Panc1 (cell line): ENCODE measurements at regions of chr1 and their contacts with region 1.

Region 1: DNA sequence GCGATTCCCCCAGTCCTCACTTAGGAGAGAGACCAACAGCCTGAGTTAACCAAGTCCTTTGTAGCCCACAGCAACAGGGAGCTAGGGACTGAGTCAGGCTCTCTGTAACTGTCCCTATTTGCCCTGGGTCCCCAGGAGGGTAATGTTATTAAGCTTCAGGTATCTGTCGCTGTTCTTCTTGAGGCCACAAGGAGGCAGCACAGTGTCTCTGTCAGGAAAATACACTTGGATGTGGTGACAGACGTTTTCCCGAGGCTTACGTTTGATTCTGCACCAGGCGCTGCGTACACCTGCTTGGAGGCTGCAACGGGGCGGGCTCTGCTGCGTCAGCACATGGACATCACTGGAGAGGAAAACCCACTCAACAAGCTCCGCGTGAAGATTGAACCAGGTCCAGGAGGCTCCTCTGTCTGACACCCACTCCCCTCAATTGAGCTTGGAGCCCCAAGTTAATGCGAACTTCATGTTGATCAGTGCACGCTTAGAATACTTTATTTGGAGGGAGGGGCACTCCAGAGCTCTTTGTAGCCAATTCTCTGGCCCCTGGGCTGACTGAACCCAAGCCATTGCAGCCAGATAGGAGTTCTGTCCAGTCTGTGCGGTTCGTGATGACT is 10.7 kb upstream of the ELF3 start:
- DNase-seq: no peak
- ATAC-seq: peak; percentile 85
- H3K4me3 ChIP-seq: no peak overlapping the region
- H3K27ac ChIP-seq: no peak overlapping the region
- H3K4me1 ChIP-seq: no peaks in the 10 kb centered on the region
- H3K27me3 ChIP-seq: no peaks in the 10 kb centered on the region
- CTCF ChIP-seq: peak; percentile 87

Region 2: DNA sequence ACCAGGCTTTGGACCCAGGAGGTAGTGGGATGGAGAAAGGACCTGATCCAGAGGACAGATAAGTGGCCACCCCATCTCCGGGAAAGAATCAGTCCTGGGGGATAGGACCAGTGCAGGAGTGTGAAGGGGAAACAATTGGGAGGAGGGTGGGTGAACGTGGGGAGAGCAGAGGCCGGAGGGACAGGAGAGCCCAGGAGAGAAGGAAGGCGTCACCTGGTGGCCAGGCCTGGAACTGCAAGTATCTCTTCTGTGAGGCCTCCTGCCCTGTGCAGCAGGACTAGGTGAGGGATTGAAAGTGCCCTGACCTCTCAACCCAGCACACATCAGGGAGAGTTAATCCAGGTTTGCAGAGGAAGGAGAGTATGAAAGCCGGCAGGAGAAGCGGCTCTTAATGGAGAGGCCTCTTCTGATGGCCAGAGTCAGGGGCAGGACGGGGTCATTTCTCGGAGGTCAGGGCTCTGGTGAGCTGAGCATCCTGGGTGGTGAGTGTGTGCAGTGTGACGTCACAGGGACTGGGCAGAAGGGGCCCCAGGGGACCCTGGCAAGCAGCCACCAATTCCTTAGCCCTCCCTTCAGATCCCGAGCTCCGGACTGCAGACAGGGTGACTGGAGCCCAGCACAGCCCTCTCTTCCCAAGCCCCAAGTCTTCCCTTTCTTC is 591.4 kb before region 1 on chr1:
- CTCF ChIA-PET with region 1: no interaction called
- POLR2A ChIA-PET with region 1: no interaction called
- in situ Hi-C with region 1: no loop called
- intact Hi-C with region 1: no loop called
- DNase-seq: peak; percentile 67
- ATAC-seq: peak; percentile 88
- H3K4me3 ChIP-seq: no peak overlapping the region
- H3K27ac ChIP-seq: no peak overlapping the region
- H3K4me1 ChIP-seq: no peaks in the 10 kb centered on the region
- H3K27me3 ChIP-seq: peaks cover 3% of the 10 kb centered on the region; the same call in 1 of the 2 replicates
- CTCF ChIP-seq: peak; percentile 99

Region 3: DNA sequence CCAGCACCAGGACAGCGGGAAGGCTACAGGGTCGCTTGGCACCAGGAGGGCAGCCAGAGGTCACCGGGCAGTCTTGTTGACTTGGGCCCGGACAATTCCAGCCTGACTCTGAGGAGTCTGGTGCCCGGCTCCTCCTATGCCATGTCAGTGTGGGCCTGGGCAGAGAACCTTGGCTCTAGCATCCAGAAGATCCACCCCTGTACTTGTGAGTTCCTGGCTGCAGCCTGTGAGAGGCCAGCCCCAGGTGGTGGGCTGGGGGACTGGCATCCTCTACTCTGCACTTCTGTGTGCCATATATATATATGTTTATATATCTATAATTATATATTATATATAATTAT is 172.3 kb after region 1 on chr1:
- CTCF ChIA-PET with region 1: no interaction called
- POLR2A ChIA-PET with region 1: interaction called, 12 read pairs
- in situ Hi-C with region 1: no loop called
- intact Hi-C with region 1: no loop called
- DNase-seq: no peak
- ATAC-seq: peak; percentile 39; the same call in 1 of the 2 replicates
- H3K4me3 ChIP-seq: no peak overlapping the region
- H3K27ac ChIP-seq: no peak overlapping the region
- H3K4me1 ChIP-seq: no peaks in the 10 kb centered on the region
- H3K27me3 ChIP-seq: no peaks in the 10 kb centered on the region
- CTCF ChIP-seq: no peak